ENCODE measurements at regions of chr12 and their contacts with region 1.

Region 1: DNA sequence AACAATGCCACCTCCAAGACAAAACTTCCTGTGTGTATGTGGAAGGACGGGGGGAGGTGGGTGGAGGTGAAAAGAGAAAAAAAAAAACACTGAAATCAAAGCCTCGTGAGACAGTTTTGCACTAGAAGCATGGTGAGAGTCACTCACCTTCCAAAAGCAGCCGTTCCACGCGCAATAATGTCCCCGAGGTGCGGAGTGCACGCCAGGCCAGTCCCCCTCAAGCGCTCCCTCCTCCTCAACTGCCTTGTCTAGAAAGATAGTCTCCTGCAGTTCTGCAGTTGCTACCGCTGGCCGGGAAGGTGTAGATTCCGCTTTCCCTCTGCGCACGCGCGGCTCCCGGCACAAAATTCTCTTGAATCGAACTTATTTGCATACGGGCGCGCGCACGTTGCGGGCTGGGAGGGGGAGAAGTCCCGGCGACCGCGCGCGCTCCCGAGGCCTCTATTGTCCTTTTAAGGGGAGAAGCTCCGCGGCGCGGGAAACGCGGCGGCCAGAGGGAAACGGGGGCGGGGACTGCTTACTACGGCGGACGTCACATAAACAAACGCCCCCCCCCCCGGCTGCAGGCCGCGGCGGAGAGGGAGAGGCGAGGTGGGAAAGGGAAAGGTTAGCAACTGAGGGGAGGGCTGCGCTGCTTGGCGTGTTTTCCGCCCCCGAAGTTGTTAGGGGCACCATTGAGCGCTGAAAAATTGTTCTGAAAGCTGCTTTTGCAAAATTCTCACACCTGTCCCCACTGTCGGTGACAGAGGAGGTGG is at the start of gene SINHCAF:
- DNase-seq: peak; percentile 100
- H3K4me3 ChIP-seq: peak within 1 kb of the TSS; percentile 99
- H3K4me3 Mint-ChIP-seq: peak within 1 kb of the TSS; percentile 98
- H3K27ac Mint-ChIP-seq: peak within 1 kb of the TSS; percentile 99
- H3K4me1 ChIP-seq: peaks cover 27% of the 10 kb centered on the region
- H3K4me1 Mint-ChIP-seq: peaks cover 16% of the 10 kb centered on the region
- H3K27me3 ChIP-seq: no peaks in the 10 kb centered on the region
- H3K27me3 Mint-ChIP-seq: no peaks in the 10 kb centered on the region
- CTCF ChIP-seq: no peak
- total RNA-seq, gene SINHCAF: 286 and 319 TPM in 2 replicates

Region 2: GRCh38 chr12:30898846-30899245 is 427.2 kb before region 1 on chr12:
- CTCF ChIA-PET with region 1: no interaction called
- POLR2A ChIA-PET with region 1: interaction called, 11 read pairs
- intact Hi-C with region 1: no loop called
- DNase-seq: no peak
- H3K4me3 ChIP-seq: no peak overlapping the region
- H3K4me3 Mint-ChIP-seq: no peak overlapping the region
- H3K27ac Mint-ChIP-seq: no peak overlapping the region
- H3K4me1 ChIP-seq: no peaks in the 10 kb centered on the region
- H3K4me1 Mint-ChIP-seq: no peaks in the 10 kb centered on the region
- H3K27me3 ChIP-seq: no peaks in the 10 kb centered on the region
- H3K27me3 Mint-ChIP-seq: peaks cover 13% of the 10 kb centered on the region
- CTCF ChIP-seq: no peak

Region 3: GRCh38 chr12:31353750-31354708 is 28.0 kb after region 1 on chr12:
- CTCF ChIA-PET with region 1: no interaction called
- POLR2A ChIA-PET with region 1: interaction called, 3 read pairs
- intact Hi-C with region 1: loop called (anchors 2 kb)
- DNase-seq: no peak
- H3K4me3 ChIP-seq: no peak overlapping the region
- H3K4me3 Mint-ChIP-seq: no peak overlapping the region
- H3K27ac Mint-ChIP-seq: peak overlapping the region; percentile 14
- H3K4me1 ChIP-seq: peaks cover 13% of the 10 kb centered on the region
- H3K4me1 Mint-ChIP-seq: peaks cover 7% of the 10 kb centered on the region
- H3K27me3 ChIP-seq: no peaks in the 10 kb centered on the region
- H3K27me3 Mint-ChIP-seq: no peaks in the 10 kb centered on the region
- CTCF ChIP-seq: no peak

Region 4: GRCh38 chr12:31369712-31370521 is 43.9 kb after region 1 on chr12:
- CTCF ChIA-PET with region 1: interaction called, 4 read pairs
- POLR2A ChIA-PET with region 1: interaction called, 145 read pairs
- intact Hi-C with region 1: loop called (anchors 1 kb)
- DNase-seq: peak; percentile 72 to 75
- H3K4me3 ChIP-seq: peak overlapping the region; percentile 27
- H3K4me3 Mint-ChIP-seq: peak overlapping the region; percentile 70
- H3K27ac Mint-ChIP-seq: peak overlapping the region; percentile 100
- H3K4me1 ChIP-seq: peaks cover 26% of the 10 kb centered on the region
- H3K4me1 Mint-ChIP-seq: peaks cover 43% of the 10 kb centered on the region
- H3K27me3 ChIP-seq: no peaks in the 10 kb centered on the region
- H3K27me3 Mint-ChIP-seq: no peaks in the 10 kb centered on the region
- CTCF ChIP-seq: no peak

Region 5: GRCh38 chr12:31578632-31579031 is 252.6 kb after region 1 on chr12:
- CTCF ChIA-PET with region 1: no interaction called
- POLR2A ChIA-PET with region 1: interaction called, 12 read pairs
- intact Hi-C with region 1: no loop called
- DNase-seq: no peak
- H3K4me3 ChIP-seq: no peak overlapping the region
- H3K4me3 Mint-ChIP-seq: no peak overlapping the region
- H3K27ac Mint-ChIP-seq: no peak overlapping the region
- H3K4me1 ChIP-seq: peaks cover 11% of the 10 kb centered on the region; the same call in 1 of the 2 replicates
- H3K4me1 Mint-ChIP-seq: no peaks in the 10 kb centered on the region
- H3K27me3 ChIP-seq: no peaks in the 10 kb centered on the region
- H3K27me3 Mint-ChIP-seq: no peaks in the 10 kb centered on the region
- CTCF ChIP-seq: no peak

Region 6: DNA sequence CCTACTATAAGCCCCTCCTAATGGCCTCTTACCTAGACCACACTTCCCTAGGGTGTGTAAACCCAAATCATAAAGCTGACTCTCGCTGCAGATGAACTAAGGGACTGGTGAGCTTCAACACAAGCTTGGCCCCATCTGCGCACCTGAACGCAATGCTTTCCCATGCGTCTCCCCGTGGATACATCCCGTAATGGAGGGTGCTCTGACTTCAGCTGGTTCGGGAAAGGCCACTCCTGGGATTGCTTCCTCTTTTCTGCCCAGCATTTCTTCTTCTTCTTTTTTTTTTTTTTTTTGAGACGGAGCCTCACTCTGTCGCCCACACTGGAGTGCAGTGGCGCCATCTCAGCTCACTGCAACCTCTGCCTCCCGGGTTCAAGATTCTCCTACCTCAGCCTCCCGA is 305.7 kb after region 1 on chr12:
- CTCF ChIA-PET with region 1: no interaction called
- POLR2A ChIA-PET with region 1: no interaction called
- intact Hi-C with region 1: loop called (anchors 5 kb)
- DNase-seq: peak in 1 of 2 experiments; percentile 23
- H3K4me3 ChIP-seq: no peak overlapping the region
- H3K4me3 Mint-ChIP-seq: no peak overlapping the region
- H3K27ac Mint-ChIP-seq: no peak overlapping the region
- H3K4me1 ChIP-seq: no peaks in the 10 kb centered on the region
- H3K4me1 Mint-ChIP-seq: peaks cover 20% of the 10 kb centered on the region
- H3K27me3 ChIP-seq: no peaks in the 10 kb centered on the region
- H3K27me3 Mint-ChIP-seq: no peaks in the 10 kb centered on the region
- CTCF ChIP-seq: no peak